ENCODE measurements at regions of chr2 and their contacts with region 1.

Region 1: DNA sequence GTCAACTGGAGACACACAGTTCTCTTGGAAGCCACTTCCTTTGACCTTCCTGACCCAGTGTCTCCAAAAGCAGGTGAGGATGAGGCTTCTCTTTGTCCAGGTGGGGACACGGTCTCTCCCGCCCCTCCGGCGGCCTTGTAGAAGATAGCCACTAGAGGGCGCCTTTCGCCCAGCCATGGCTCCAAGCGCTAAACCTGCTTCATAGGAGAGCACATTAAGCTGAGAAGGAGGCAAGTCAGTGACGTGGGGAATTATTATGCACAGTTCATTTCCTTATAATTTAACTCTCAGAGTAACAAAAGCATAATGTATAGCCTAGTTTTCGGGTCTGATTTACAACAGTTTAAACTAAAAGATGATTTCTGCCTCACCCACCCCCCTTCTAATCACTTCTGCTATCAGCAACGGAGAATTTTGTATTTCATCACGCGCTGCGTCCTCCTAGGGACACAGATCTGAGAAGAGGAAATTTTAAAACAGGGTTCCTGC is 208.7 kb downstream of the ICOS start:
- DNase-seq: peak; percentile 50 to 82 (median 76)
- ATAC-seq: peak; percentile 98
- H3K4me3 ChIP-seq: peak overlapping the region; percentile 61
- H3K4me3 Mint-ChIP-seq: peak overlapping the region; percentile 82 to 92 (median 86)
- H3K27ac ChIP-seq: peak overlapping the region; percentile 29
- H3K27ac Mint-ChIP-seq: peak overlapping the region; percentile 22 to 83 (median 56)
- H3K4me1 ChIP-seq: peaks cover 0 to 4% of the 10 kb centered on the region in 2 donors
- H3K4me1 Mint-ChIP-seq: peaks cover 3 to 11% (median 10%) of the 10 kb centered on the region in 7 donors
- H3K27me3 ChIP-seq: no peaks in the 10 kb centered on the region
- H3K27me3 Mint-ChIP-seq: peaks cover 0 to 43% (median 15%) of the 10 kb centered on the region in 5 donors

Region 2: GRCh38 chr2:203928849-203929248 is 216.5 kb before region 1 on chr2:
- CTCF ChIA-PET with region 1: interaction called, 5 read pairs
- POLR2A ChIA-PET with region 1: no interaction called
- intact Hi-C with region 1: loop called in 1 of 2 experiments (anchors 1 kb)
- DNase-seq: peak in 4 of 9 donors; percentile 31 to 50 (median 45)
- ATAC-seq: no peak
- H3K4me3 ChIP-seq: no peak overlapping the region
- H3K4me3 Mint-ChIP-seq: no peak overlapping the region
- H3K27ac ChIP-seq: no peak overlapping the region
- H3K27ac Mint-ChIP-seq: peak overlapping the region in 2 of 9 donors; percentile 2 to 55
- H3K4me1 ChIP-seq: peaks cover 15 to 21% of the 10 kb centered on the region in 2 donors
- H3K4me1 Mint-ChIP-seq: peaks cover 13 to 46% (median 39%) of the 10 kb centered on the region in 7 donors
- H3K27me3 ChIP-seq: no peaks in the 10 kb centered on the region
- H3K27me3 Mint-ChIP-seq: peaks cover 0 to 13% (median 0%) of the 10 kb centered on the region in 5 donors

Region 3: DNA sequence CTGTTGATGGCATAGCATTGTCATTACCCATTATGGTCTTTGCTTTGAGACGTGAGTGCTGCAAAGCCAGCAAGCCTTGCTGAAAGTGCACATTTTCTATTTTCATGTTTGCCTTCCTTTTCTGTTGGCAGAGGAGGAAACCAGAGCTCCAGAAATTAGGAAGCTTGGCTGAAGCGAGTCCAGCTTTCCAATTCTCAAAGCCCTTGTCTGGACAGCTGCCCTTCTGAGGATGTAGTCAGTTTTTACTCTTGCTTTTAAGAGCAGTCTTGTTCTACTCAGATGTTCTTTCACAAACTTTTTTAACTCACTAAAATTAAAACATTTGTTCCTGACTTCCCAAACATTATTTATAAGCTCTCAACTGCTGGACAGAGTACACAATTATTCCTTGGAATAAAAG is 115.0 kb before region 1 on chr2:
- CTCF ChIA-PET with region 1: no interaction called
- POLR2A ChIA-PET with region 1: no interaction called
- intact Hi-C with region 1: no loop called
- DNase-seq: no peak
- ATAC-seq: no peak
- H3K4me3 ChIP-seq: no peak overlapping the region
- H3K4me3 Mint-ChIP-seq: no peak overlapping the region
- H3K27ac ChIP-seq: no peak overlapping the region
- H3K27ac Mint-ChIP-seq: no peak overlapping the region
- H3K4me1 ChIP-seq: peaks cover 0 to 7% of the 10 kb centered on the region in 2 donors
- H3K4me1 Mint-ChIP-seq: peaks cover 0 to 17% (median 7%) of the 10 kb centered on the region in 7 donors
- H3K27me3 ChIP-seq: no peaks in the 10 kb centered on the region
- H3K27me3 Mint-ChIP-seq: no peaks in the 10 kb centered on the region

Region 4: GRCh38 chr2:204177977-204178540 is 32.8 kb after region 1 on chr2:
- CTCF ChIA-PET with region 1: interaction called, 19 read pairs
- POLR2A ChIA-PET with region 1: no interaction called
- intact Hi-C with region 1: loop called (anchors 1 kb)
- DNase-seq: peak; percentile 35 to 75 (median 63)
- ATAC-seq: peak; percentile 73
- H3K4me3 ChIP-seq: no peak overlapping the region
- H3K4me3 Mint-ChIP-seq: no peak overlapping the region
- H3K27ac ChIP-seq: no peak overlapping the region
- H3K27ac Mint-ChIP-seq: no peak overlapping the region
- H3K4me1 ChIP-seq: no peaks in the 10 kb centered on the region
- H3K4me1 Mint-ChIP-seq: peaks cover 0 to 10% (median 0%) of the 10 kb centered on the region in 7 donors
- H3K27me3 ChIP-seq: no peaks in the 10 kb centered on the region
- H3K27me3 Mint-ChIP-seq: peaks cover 8 to 36% (median 12%) of the 10 kb centered on the region in 5 donors

Region 5: DNA sequence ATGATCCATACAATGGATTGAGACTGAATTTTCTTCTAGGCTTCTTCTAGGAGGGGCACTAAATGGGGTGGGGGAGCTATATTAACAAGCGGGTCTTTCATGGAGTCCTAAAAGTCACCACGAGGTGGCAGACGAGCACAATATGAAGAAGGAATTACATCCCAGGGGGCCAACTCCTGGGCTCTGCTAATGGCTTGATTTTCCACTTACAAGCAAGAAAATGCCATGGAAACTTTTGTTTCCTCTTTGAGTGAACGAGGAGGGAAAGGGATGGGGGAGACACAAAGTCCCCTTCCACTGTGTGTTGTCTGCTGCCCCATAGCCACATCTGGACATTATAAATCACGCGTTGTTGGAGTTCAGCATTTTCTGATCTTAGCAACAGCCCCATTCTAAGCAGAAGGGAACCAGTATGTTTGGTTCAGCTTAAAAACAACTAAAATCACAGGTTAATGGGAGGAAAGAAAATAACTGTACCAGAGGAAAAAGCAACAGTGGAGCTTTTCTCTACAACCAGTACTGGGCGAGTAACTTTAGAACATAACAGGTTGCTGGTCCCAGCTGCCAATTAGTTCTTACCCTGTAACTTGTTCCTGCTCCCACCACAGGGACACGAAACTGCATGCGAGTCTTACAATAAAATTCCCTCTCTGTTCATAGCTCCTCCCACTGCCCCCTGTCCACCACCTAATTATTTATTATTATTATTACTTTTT is 115.0 kb after region 1 on chr2:
- CTCF ChIA-PET with region 1: interaction called, 4 read pairs
- POLR2A ChIA-PET with region 1: no interaction called
- intact Hi-C with region 1: loop called in 1 of 2 experiments (anchors 1 kb)
- DNase-seq: peak in 6 of 9 donors; percentile 30 to 47 (median 36)
- ATAC-seq: peak; percentile 60
- H3K4me3 ChIP-seq: no peak overlapping the region
- H3K4me3 Mint-ChIP-seq: no peak overlapping the region
- H3K27ac ChIP-seq: no peak overlapping the region
- H3K27ac Mint-ChIP-seq: no peak overlapping the region
- H3K4me1 ChIP-seq: no peaks in the 10 kb centered on the region
- H3K4me1 Mint-ChIP-seq: peaks cover 0 to 2% (median 0%) of the 10 kb centered on the region in 7 donors
- H3K27me3 ChIP-seq: peaks cover 2 to 3% of the 10 kb centered on the region in 2 donors
- H3K27me3 Mint-ChIP-seq: peaks cover 20 to 58% (median 26%) of the 10 kb centered on the region in 5 donors

Region 6: GRCh38 chr2:205925373-205926337 is 1780.3 kb after region 1 on chr2:
- CTCF ChIA-PET with region 1: interaction called, 3 read pairs
- POLR2A ChIA-PET with region 1: no interaction called
- intact Hi-C with region 1: loop called in 1 of 2 experiments (anchors 1 kb)
- DNase-seq: peak; percentile 23 to 79 (median 61)
- ATAC-seq: peak; percentile 81
- H3K4me3 ChIP-seq: no peak overlapping the region
- H3K4me3 Mint-ChIP-seq: peak overlapping the region in 6 of 10 donors; percentile 9 to 62 (median 60)
- H3K27ac ChIP-seq: no peak overlapping the region
- H3K27ac Mint-ChIP-seq: peak overlapping the region in 1 of 9 donors; percentile 21
- H3K4me1 ChIP-seq: peaks cover 0 to 5% of the 10 kb centered on the region in 2 donors
- H3K4me1 Mint-ChIP-seq: peaks cover 5 to 13% (median 9%) of the 10 kb centered on the region in 7 donors
- H3K27me3 ChIP-seq: peaks cover 0 to 4% of the 10 kb centered on the region in 2 donors
- H3K27me3 Mint-ChIP-seq: peaks cover 40 to 58% (median 50%) of the 10 kb centered on the region in 5 donors